ENCODE measurements at regions of chr1 and their contacts with region 1.

Region 1: DNA sequence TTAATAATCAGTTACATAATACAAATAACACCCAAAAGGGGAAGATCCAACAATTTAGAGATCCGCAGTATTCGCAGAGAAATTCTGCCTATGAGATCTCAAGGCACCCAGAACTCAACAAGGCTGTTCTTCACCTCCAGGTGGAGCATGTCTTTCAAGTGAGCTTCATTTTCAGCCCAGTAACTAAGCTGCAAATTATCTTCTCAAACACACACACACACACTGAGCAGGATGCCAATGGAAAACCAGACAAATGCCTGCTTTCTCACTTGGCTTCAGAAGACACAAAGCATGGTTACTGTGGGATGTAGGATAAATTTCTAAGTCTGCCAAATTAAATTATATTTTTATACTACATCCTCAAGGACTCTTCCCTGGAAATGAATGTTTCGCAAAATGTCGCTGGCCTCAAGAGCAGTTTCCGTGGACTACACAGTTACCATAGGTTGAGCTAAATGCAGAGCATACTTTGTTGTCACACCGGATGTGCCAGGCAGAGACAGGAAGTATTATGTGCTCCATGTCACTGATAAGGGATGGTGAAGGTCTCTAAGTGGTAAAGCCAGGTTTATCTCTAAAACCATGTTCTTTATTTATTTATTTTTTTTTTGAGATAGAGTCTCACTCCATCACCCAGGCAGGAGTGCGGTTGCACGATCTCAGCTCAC is 30.3 kb downstream of the UBR4 start:
- DNase-seq: no peak

Region 2: DNA sequence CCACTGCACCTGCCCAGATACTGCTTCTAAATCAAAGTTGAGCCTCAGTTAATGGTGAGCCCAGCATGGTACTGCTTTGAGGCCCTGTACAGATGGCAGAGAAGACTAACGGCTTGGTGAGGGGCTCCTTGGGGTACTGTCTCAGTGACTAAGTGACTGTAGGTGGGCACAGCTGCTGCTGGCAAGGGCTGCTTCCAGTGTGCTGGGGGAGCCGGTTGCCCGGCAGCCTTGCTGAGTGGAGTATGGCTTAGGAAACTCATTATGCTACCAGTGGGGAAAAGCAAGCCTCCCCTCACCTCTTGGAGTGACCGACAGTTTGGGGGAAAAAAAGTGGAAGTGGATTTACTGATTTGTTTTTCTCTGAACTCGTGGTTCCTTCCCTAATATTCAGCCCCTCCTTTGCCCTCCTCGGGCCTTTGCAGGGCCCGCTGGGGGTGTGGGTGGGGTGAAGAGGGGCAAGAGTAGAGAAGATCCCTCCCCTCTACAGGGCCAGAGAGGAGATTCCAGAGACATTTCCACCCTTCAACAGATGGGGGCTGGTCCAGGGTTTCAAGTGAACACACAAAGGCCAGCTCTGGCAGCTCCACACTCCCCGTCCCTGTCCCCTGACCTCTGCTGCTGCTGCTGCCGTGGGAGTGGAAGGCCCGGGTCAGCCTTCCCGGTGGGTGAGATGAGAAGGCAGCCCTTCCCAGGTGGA is 1663.7 kb before region 1 on chr1:
- intact Hi-C with region 1: loop called in 1 of 2 experiments (anchors 10 kb)
- DNase-seq: no peak

Region 3: GRCh38 chr1:19191781-19192180 is 12.1 kb after region 1 on chr1:
- intact Hi-C with region 1: loop called in 1 of 2 experiments (anchors 1 kb)
- DNase-seq: no peak